ENCODE measurements at regions of chr2 and their contacts with region 1.

Region 1: GRCh38 chr2:11688222-11689069 is 18.5 kb upstream of the NTSR2 start:
- DNase-seq: peak; percentile 56 to 88 (median 75)
- ATAC-seq: peak; percentile 84 to 95 (median 90)
- H3K4me3 ChIP-seq: peak overlapping the region in 1 of 2 donors; percentile 26
- H3K4me3 Mint-ChIP-seq: peak overlapping the region; percentile 10 to 61 (median 48)
- H3K27ac ChIP-seq: no peak overlapping the region
- H3K27ac Mint-ChIP-seq: peak overlapping the region; percentile 4 to 41
- H3K4me1 ChIP-seq: peaks cover 2 to 13% of the 10 kb centered on the region in 2 experiments
- H3K4me1 Mint-ChIP-seq: peaks cover 10 to 16% (median 11%) of the 10 kb centered on the region in 3 donors
- H3K27me3 ChIP-seq: peaks cover 0 to 12% of the 10 kb centered on the region in 2 experiments
- H3K27me3 Mint-ChIP-seq: peaks cover 5 to 13% of the 10 kb centered on the region in 2 donors

Region 2: GRCh38 chr2:10382354-10383061 is 1305.9 kb before region 1 on chr2:
- CTCF ChIA-PET with region 1: no interaction called
- POLR2A ChIA-PET with region 1: no interaction called
- DNase-seq: peak; percentile 9 to 82 (median 56)
- ATAC-seq: peak; percentile 80 to 94 (median 81)
- H3K4me3 ChIP-seq: peak overlapping the region; percentile 35 to 58
- H3K4me3 Mint-ChIP-seq: peak overlapping the region; percentile 46 to 78 (median 65)
- H3K27ac ChIP-seq: peak overlapping the region; percentile 69
- H3K27ac Mint-ChIP-seq: peak overlapping the region; percentile 89 to 93
- H3K4me1 ChIP-seq: peaks cover 51 to 98% of the 10 kb centered on the region in 2 experiments
- H3K4me1 Mint-ChIP-seq: peaks cover 88 to 94% (median 92%) of the 10 kb centered on the region in 3 donors
- H3K27me3 ChIP-seq: no peaks in the 10 kb centered on the region
- H3K27me3 Mint-ChIP-seq: no peaks in the 10 kb centered on the region

Region 3: DNA sequence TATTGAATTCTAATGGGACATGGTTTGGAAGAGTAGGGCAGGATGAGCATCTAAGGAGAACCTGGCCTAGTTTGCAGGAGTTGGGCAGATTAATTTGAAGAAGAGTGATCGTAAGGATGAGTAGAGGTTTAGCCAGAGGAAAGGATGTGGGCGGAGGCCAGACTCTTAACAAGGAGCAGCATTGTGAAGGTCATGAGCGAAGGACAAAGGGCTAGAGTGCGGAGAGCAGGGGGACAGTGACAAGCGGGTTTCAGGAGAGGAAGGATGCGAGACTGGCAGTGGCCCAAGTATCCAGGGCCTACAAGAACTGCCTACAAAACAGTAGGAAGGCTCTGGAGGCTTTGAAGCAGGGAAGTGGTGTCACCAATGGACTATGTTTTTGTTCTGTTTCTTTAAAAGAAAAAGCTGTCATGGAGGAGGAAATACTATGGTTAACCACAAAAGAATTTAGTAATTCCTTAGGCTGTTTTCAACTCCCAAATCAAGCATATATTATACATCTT is 513.1 kb before region 1 on chr2:
- CTCF ChIA-PET with region 1: interaction called in 1 of 2 experiments, 10 read pairs
- POLR2A ChIA-PET with region 1: no interaction called
- DNase-seq: no peak
- ATAC-seq: peak in 1 of 4 experiments; percentile 29
- H3K4me3 ChIP-seq: no peak overlapping the region
- H3K4me3 Mint-ChIP-seq: no peak overlapping the region
- H3K27ac ChIP-seq: no peak overlapping the region
- H3K27ac Mint-ChIP-seq: peak overlapping the region; percentile 71 to 72
- H3K4me1 ChIP-seq: peaks cover 4 to 5% of the 10 kb centered on the region in 2 experiments
- H3K4me1 Mint-ChIP-seq: peaks cover 12 to 13% (median 12%) of the 10 kb centered on the region in 3 donors
- H3K27me3 ChIP-seq: no peaks in the 10 kb centered on the region
- H3K27me3 Mint-ChIP-seq: no peaks in the 10 kb centered on the region

Region 4: GRCh38 chr2:11647834-11648600 is 40.4 kb before region 1 on chr2:
- CTCF ChIA-PET with region 1: interaction called in 1 of 2 experiments, 11 read pairs
- POLR2A ChIA-PET with region 1: no interaction called
- DNase-seq: no peak
- ATAC-seq: no peak
- H3K4me3 ChIP-seq: no peak overlapping the region
- H3K4me3 Mint-ChIP-seq: no peak overlapping the region
- H3K27ac ChIP-seq: no peak overlapping the region
- H3K27ac Mint-ChIP-seq: no peak overlapping the region
- H3K4me1 ChIP-seq: no peaks in the 10 kb centered on the region
- H3K4me1 Mint-ChIP-seq: no peaks in the 10 kb centered on the region
- H3K27me3 ChIP-seq: peaks cover 0 to 6% of the 10 kb centered on the region in 2 experiments
- H3K27me3 Mint-ChIP-seq: peaks cover 10 to 11% of the 10 kb centered on the region in 2 donors

Region 5: DNA sequence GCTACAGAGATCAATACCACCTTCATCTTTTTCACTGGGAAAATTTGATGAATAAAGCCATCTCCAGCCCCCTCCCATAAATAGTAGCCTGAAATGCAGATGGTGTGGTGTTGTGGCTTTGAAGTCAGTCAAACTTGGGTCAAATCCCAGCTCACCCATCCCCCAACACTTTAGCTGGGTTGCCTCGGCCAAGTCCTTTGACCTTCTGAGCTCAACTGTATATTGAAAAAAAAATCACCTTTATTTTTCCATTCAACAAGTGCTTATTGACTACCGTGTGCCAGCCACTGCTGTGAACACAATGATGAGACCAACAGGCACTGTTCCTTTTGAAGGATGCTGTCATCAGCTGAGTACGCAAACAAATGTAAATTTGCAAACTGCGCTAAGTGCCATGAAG is 16.6 kb after region 1 on chr2:
- CTCF ChIA-PET with region 1: interaction called in 1 of 2 experiments, 13 read pairs
- POLR2A ChIA-PET with region 1: no interaction called
- DNase-seq: no peak
- ATAC-seq: no peak
- H3K4me3 ChIP-seq: no peak overlapping the region
- H3K4me3 Mint-ChIP-seq: no peak overlapping the region
- H3K27ac ChIP-seq: no peak overlapping the region
- H3K27ac Mint-ChIP-seq: no peak overlapping the region
- H3K4me1 ChIP-seq: no peaks in the 10 kb centered on the region
- H3K4me1 Mint-ChIP-seq: no peaks in the 10 kb centered on the region
- H3K27me3 ChIP-seq: no peaks in the 10 kb centered on the region
- H3K27me3 Mint-ChIP-seq: no peaks in the 10 kb centered on the region

Region 6: GRCh38 chr2:11738589-11739436 is 50.4 kb after region 1 on chr2:
- CTCF ChIA-PET with region 1: interaction called, 4 to 10 read pairs
- POLR2A ChIA-PET with region 1: interaction called in 1 of 2 experiments, 4 read pairs
- DNase-seq: peak in 6 of 35 experiments; percentile 9 to 62 (median 28)
- ATAC-seq: peak in 3 of 4 experiments; percentile 58 to 76 (median 74)
- H3K4me3 ChIP-seq: no peak overlapping the region
- H3K4me3 Mint-ChIP-seq: no peak overlapping the region
- H3K27ac ChIP-seq: no peak overlapping the region
- H3K27ac Mint-ChIP-seq: peak overlapping the region in 1 of 2 donors; percentile 28
- H3K4me1 ChIP-seq: peaks cover 0 to 13% of the 10 kb centered on the region in 2 experiments
- H3K4me1 Mint-ChIP-seq: peaks cover 2 to 23% (median 9%) of the 10 kb centered on the region in 3 donors
- H3K27me3 ChIP-seq: peaks cover 0 to 6% of the 10 kb centered on the region in 2 experiments
- H3K27me3 Mint-ChIP-seq: peaks cover 6% of the 10 kb centered on the region in 2 donors

Region 7: GRCh38 chr2:11778923-11779757 is 90.7 kb after region 1 on chr2:
- CTCF ChIA-PET with region 1: interaction called, 27 to 36 read pairs
- POLR2A ChIA-PET with region 1: no interaction called
- DNase-seq: peak; percentile 62 to 92 (median 83)
- ATAC-seq: peak; percentile 91 to 93 (median 92)
- H3K4me3 ChIP-seq: no peak overlapping the region
- H3K4me3 Mint-ChIP-seq: peak overlapping the region; percentile 57 to 68 (median 63)
- H3K27ac ChIP-seq: peak overlapping the region; percentile 52
- H3K27ac Mint-ChIP-seq: peak overlapping the region; percentile 90 to 91
- H3K4me1 ChIP-seq: peaks cover 6 to 28% of the 10 kb centered on the region in 2 experiments
- H3K4me1 Mint-ChIP-seq: peaks cover 41 to 47% (median 43%) of the 10 kb centered on the region in 3 donors
- H3K27me3 ChIP-seq: no peaks in the 10 kb centered on the region
- H3K27me3 Mint-ChIP-seq: no peaks in the 10 kb centered on the region

Region 8: GRCh38 chr2:11784747-11785610 is 96.5 kb after region 1 on chr2:
- CTCF ChIA-PET with region 1: interaction called, 27 to 36 read pairs
- POLR2A ChIA-PET with region 1: no interaction called
- DNase-seq: peak in 30 of 35 experiments; percentile 10 to 66 (median 28)
- ATAC-seq: peak; percentile 52 to 65 (median 56)
- H3K4me3 ChIP-seq: no peak overlapping the region
- H3K4me3 Mint-ChIP-seq: no peak overlapping the region
- H3K27ac ChIP-seq: no peak overlapping the region
- H3K27ac Mint-ChIP-seq: peak overlapping the region in 1 of 2 donors; percentile 34
- H3K4me1 ChIP-seq: no peaks in the 10 kb centered on the region
- H3K4me1 Mint-ChIP-seq: peaks cover 0 to 7% (median 0%) of the 10 kb centered on the region in 3 donors
- H3K27me3 ChIP-seq: peaks cover 0 to 2% of the 10 kb centered on the region in 2 experiments
- H3K27me3 Mint-ChIP-seq: no peaks in the 10 kb centered on the region